Natural killer cell (primary cell): ENCODE measurements at regions of chr20 and their contacts with region 1.

Region 1: GRCh38 chr20:45934586-45935415 is at the start of gene PCIF1:
- DNase-seq: peak; percentile 98 to 100
- ATAC-seq: peak; percentile 77 to 91 (median 84)
- H3K4me3 ChIP-seq: peak within 1 kb of the TSS; percentile 99
- H3K4me3 Mint-ChIP-seq: peak within 1 kb of the TSS; percentile 96
- H3K27ac ChIP-seq: peak within 1 kb of the TSS; percentile 98
- H3K27ac Mint-ChIP-seq: peak within 1 kb of the TSS; percentile 96 to 97
- H3K4me1 ChIP-seq: peaks cover 26% of the 10 kb centered on the region
- H3K4me1 Mint-ChIP-seq: peaks cover 23 to 31% of the 10 kb centered on the region in 2 donors
- H3K27me3 ChIP-seq: no peaks in the 10 kb centered on the region
- H3K27me3 Mint-ChIP-seq: no peaks in the 10 kb centered on the region
- CTCF ChIP-seq: no peak
- total RNA-seq, gene PCIF1: 72.0 to 85.1 (median 73.3) TPM

Region 2: GRCh38 chr20:45347936-45348778 is 586.6 kb before region 1 on chr20 and contains the start of gene SDC4:
- intact Hi-C with region 1: no loop called
- DNase-seq: peak; percentile 30 to 80
- ATAC-seq: peak; percentile 76 to 90 (median 79)
- H3K4me3 ChIP-seq: peak within 1 kb of the TSS; percentile 31
- H3K4me3 Mint-ChIP-seq: peak within 1 kb of the TSS; percentile 78
- H3K27ac ChIP-seq: no peak within 1 kb of the TSS
- H3K27ac Mint-ChIP-seq: peak within 1 kb of the TSS in 1 of 2 donors; percentile 29
- H3K4me1 ChIP-seq: peaks cover 20% of the 10 kb centered on the region
- H3K4me1 Mint-ChIP-seq: peaks cover 0 to 15% of the 10 kb centered on the region in 2 donors
- H3K27me3 ChIP-seq: no peaks in the 10 kb centered on the region
- H3K27me3 Mint-ChIP-seq: no peaks in the 10 kb centered on the region
- CTCF ChIP-seq: no peak
- total RNA-seq, gene SDC4: 0.45 to 1.8 (median 1.5) TPM

Region 3: DNA sequence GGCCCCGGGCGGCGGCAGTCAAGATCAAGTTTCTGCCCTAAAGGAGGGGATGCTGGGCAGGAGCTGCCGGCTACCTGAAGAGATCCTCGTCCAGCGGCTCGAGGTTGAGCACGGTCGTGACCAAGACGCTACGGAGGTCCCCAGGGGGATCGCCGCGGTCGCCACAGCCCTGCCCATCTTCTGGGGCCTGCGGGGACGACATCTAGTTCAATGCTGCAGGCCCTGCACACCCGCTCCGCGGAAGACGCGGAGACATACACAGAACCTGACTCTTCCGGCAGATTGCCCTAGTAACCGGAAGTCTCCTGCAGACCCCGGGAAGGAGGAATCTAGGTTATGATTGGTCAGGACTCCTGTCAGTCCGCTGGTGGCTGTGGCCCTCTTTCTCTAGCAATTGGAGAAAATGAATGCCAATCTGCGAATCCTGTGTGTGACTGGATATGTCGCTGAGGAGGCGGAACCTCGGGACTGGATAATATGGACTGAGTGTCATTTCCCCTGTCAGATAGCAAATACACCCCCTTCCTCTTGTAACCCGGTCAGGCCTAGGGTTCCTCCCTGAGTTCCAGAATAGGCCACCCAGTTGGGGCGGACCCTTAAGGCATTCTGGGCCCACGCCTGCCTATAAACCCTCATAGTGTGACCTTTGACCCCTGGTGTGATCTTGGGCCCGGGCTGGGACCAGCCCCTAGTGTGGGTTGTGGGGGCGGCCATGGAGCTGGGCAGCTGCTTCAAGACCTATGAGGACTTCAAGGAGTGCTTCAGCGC is 77.5 kb before region 1 on chr20 and contains the starts of genes ACOT8 and ZSWIM3:
- intact Hi-C with region 1: loop called (anchors 2 kb)
- DNase-seq: peak; percentile 82 to 100
- ATAC-seq: peak; percentile 95 to 98 (median 95)
- H3K4me3 ChIP-seq: peak within 1 kb of the TSS; percentile 91
- H3K4me3 Mint-ChIP-seq: peak within 1 kb of the TSS; percentile 95
- H3K27ac ChIP-seq: peak within 1 kb of the TSS; percentile 99
- H3K27ac Mint-ChIP-seq: peak within 1 kb of the TSS; percentile 95 to 96
- H3K4me1 ChIP-seq: peaks cover 33% of the 10 kb centered on the region
- H3K4me1 Mint-ChIP-seq: peaks cover 38 to 59% of the 10 kb centered on the region in 2 donors
- H3K27me3 ChIP-seq: no peaks in the 10 kb centered on the region
- H3K27me3 Mint-ChIP-seq: no peaks in the 10 kb centered on the region
- CTCF ChIP-seq: no peak
- total RNA-seq, gene ACOT8: 30.5 to 35.4 (median 31.7) TPM
- total RNA-seq, gene ZSWIM3: 1.4 to 2.3 (median 1.5) TPM

Region 4: DNA sequence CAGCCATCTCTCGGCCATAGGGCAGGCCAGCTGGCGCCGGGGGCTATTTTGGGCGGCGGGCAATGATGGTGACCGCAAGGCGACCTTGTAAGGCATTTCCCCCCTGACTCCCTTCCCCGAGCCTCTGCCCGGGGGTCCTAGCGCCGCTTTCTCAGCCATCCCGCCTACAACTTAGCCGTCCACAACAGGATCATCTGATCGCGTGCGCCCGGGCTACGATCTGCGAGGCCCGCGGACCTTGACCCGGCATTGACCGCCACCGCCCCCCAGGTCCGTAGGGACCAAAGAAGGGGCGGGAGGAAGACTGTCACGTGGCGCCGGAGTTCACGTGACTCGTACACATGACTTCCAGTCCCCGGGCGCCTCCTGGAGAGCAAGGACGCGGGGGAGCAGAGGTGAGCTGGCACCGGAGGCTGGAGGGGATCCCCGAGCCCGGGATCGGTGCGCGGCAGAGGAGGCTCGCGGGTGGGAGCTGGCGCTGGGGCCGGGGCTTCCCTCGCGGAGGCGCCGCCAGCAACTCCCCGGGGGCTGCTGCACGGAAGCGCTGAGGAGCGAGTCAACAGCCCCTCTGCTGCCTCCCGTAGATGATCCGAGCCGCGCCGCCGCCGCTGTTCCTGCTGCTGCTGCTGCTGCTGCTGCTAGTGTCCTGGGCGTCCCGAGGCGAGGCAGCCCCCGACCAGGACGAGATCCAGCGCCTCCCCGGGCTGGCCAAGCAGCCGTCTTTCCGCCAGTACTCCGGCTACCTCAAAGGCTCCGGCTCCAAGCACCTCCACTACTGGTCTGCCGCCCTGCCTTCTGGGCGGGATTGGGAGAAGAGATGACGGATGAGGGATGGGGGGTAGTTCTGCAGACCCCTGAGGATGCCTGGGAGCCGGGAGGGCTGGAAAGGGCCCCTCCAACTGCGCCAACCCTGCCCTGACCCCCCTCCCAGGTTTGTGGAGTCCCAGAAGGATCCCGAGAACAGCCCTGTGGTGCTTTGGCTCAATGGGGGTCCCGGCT is 43.5 kb before region 1 on chr20 and contains the starts of genes CTSA and NEURL2:
- intact Hi-C with region 1: loop called (anchors 1 kb)
- DNase-seq: peak; percentile 78 to 90
- ATAC-seq: peak; percentile 73 to 87 (median 86)
- H3K4me3 ChIP-seq: peak within 1 kb of the TSS; percentile 68
- H3K4me3 Mint-ChIP-seq: peak within 1 kb of the TSS; percentile 93
- H3K27ac ChIP-seq: peak within 1 kb of the TSS; percentile 32
- H3K27ac Mint-ChIP-seq: peak within 1 kb of the TSS; percentile 58 to 88
- H3K4me1 ChIP-seq: peaks cover 38% of the 10 kb centered on the region
- H3K4me1 Mint-ChIP-seq: peaks cover 5 to 24% of the 10 kb centered on the region in 2 donors
- H3K27me3 ChIP-seq: no peaks in the 10 kb centered on the region
- H3K27me3 Mint-ChIP-seq: no peaks in the 10 kb centered on the region
- CTCF ChIP-seq: no peak
- total RNA-seq, gene CTSA: 72.8 to 108 (median 86.8) TPM
- total RNA-seq, gene NEURL2: 0.89 to 1.4 (median 1.4) TPM

Region 5: DNA sequence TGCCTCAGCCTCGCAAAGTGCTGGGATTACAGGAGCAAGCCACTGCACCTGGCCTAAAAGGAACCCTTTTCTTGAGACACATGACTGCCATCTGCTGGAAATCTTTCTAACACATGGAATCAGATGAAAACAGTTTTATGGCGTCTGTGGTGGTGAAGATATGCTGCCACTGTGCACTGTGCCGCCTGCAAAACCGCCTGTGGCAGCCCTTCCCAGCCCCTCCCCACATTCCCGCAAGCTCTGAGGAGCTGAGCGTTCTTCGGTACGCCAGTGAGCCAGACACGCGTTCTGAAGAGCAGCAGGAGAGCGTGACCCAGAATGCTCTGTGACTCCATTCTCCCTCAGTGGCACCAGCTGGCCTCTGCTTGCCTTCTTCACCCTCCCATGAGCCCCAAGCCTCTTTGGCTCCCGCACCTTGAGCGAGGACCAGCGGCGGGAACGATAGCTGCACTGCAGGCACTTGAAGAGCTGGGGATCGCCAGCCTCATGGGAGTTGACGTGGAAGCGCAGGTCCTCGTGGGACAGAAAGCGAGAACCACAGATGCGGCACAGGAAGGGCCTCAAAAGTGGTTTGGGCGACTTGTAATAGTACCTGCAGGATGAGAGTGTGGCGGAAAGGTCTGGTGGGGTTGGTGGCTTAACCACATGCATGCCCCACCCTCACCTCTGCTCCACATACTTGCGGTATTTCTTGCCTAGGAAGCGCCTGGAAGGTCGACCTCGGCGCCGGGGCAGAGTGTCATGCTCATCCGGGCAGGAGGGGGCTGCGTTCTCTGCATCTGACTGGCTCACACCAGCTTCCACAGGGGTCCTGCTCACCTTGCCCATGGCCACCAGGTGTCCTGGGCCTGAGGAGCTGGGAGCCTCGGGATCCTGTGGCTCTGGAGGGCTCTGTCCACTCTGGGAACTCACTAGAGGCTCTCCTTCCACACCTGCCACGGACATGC is 28.5 kb after region 1 on chr20:
- intact Hi-C with region 1: loop called (anchors 2 kb)
- DNase-seq: peak in 1 of 2 donors; percentile 70
- ATAC-seq: peak; percentile 40 to 81 (median 41)
- H3K4me3 ChIP-seq: no peak overlapping the region
- H3K4me3 Mint-ChIP-seq: no peak overlapping the region
- H3K27ac ChIP-seq: no peak overlapping the region
- H3K27ac Mint-ChIP-seq: peak overlapping the region in 1 of 2 donors; percentile 80
- H3K4me1 ChIP-seq: peaks cover 16% of the 10 kb centered on the region
- H3K4me1 Mint-ChIP-seq: peaks cover 0 to 6% of the 10 kb centered on the region in 2 donors
- H3K27me3 ChIP-seq: no peaks in the 10 kb centered on the region
- H3K27me3 Mint-ChIP-seq: no peaks in the 10 kb centered on the region
- CTCF ChIP-seq: peak; percentile 43